Dorsolateral prefrontal cortex (tissue), 120 donors: ENCODE measurements at regions of chr12 and their contacts with region 1.

Region 1: DNA sequence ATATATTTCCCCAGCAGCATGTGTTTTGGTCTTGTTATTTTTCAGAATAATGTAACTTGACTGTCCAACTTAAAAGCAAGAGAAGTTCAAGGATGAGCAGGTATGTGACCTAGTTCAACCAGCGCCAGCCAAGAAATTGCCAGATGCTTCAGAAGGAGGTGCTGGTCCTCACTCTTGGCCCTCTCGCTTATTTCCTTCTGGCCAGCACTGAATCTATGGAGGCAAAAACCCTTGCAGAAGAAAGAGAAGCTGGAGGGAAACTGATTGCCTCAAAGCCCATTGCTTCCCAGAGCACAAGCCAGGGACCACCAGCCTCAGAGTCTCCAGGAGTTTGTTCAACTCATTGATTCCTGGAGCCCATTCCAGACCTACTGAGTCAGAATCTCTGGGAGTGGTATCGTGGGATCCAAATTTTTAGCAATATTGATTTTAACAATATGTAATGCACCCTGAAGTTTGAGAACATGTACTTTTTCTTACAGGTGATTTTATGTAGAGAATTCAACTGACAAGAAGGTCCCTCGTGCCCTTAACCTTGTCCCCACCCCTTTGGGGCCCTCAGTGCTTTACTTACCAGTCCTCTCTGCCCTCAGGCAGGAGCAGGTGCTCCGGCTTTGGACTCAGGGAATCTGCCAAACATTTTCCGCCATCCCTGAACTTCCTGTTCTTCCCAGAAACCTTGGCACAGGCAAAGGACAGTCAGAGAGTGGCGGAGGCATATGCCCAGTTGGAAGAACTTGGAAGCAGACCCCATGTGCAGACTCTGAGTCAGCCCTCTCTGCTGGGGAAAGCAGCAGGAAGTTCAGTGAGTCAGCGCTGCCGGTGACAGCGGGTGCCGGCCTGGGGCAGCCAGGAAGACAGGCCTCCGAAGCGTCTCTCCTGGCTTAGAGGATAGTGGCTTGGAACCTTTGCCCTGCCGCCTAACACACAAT is 10.3 kb downstream of the BEST3 start:
- DNase-seq: peak in 6 of 10 donors; percentile 34 to 91 (median 46)
- H3K4me3 ChIP-seq: no peak overlapping the region
- H3K27ac ChIP-seq: peak overlapping the region in 14 of 59 donors; percentile 2 to 77 (median 33)
- H3K27me3 ChIP-seq: no peaks in the 10 kb centered on the region
- CTCF ChIP-seq: no peak

Region 2: GRCh38 chr12:69672195-69672594 is 16.6 kb before region 1 on chr12:
- intact Hi-C with region 1: loop called in 1 of 2 experiments (anchors 2 kb)
- DNase-seq: no peak
- H3K4me3 ChIP-seq: no peak overlapping the region
- H3K27ac ChIP-seq: no peak overlapping the region
- H3K27me3 ChIP-seq: no peaks in the 10 kb centered on the region
- CTCF ChIP-seq: no peak